ENCODE measurements at regions of chr15 and their contacts with region 1.

Region 1: DNA sequence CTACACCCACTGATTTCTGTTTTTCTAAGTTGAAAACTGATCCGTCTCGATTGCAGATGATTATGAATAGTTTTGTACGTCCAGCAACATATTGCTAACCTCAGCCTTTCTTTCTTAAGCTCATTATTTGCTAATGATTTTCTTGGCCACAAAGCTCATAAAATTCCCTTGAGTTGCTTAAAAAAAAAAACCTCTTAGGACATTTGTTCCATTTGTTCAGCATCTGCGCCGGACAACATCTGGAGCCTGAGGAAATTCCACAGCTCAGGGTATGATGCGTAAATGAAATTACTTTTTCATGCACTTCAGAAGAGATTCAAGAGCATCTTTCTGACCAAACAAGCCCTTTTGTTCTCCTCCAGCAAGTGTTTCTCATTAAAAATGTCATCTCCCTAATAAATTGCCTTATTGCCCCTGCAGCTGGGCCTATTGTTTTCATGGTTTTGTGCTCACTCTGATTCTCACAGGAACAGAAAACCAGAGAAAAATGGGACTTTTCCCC is 249.1 kb upstream of the MCTP2 start:
- DNase-seq: no peak
- ATAC-seq: peak; percentile 22
- H3K4me3 ChIP-seq: no peak overlapping the region
- H3K4me1 ChIP-seq: no peaks in the 10 kb centered on the region
- CTCF ChIP-seq: no peak

Region 2: GRCh38 chr15:94119923-94120775 is 137.9 kb after region 1 on chr15:
- intact Hi-C with region 1: loop called in 1 of 2 experiments (anchors 10 kb)
- DNase-seq: peak in 1 of 3 donors; percentile 72
- ATAC-seq: peak; percentile 96
- H3K4me3 ChIP-seq: no peak overlapping the region
- H3K4me1 ChIP-seq: no peaks in the 10 kb centered on the region
- CTCF ChIP-seq: peak; percentile 57

Measured in mucosa of descending colon (tissue), 3 donors.